ENCODE measurements at regions of chr4 and their contacts with region 1.

Region 1: GRCh38 chr4:107757864-107758476 is 37.9 kb upstream of the PAPSS1 start:
- DNase-seq: peak; percentile 20
- CTCF ChIP-seq: peak; percentile 40

Region 2: DNA sequence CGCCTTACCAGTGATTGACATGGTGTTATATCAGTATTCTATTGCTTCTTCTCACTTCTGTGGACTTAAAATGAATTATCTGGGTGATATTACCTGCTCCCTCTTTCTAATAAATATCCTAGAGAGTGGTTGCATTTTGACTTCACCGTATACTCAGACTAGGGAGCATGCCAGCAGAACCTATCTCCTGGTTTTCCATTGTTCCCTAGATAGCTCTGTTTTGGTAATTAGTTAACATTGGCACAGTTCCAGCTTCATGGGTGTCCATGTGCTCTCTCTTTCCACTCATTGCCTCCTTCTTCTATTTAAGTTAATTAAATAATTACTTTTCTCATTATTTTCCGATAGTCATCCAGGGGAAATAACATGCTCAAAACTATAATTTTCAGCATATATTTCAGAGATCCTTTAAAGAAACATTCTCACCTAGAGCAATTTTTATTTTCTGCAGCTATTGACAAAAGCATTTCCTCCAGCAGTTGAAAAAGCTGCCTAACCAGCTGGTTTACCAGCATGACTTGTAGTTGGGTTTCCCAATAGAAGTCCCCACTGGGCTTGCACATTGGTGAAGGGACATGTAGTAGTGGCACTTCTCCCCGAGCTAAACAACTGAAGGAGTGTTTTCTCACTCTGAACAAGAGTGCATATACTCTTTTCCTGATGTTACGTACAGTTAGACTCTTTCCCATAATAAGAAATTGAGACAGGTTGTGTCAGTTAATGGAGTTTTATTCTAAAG is 10.1 kb before region 1 on chr4:
- CTCF ChIA-PET with region 1: interaction called, 22 read pairs
- POLR2A ChIA-PET with region 1: no interaction called
- DNase-seq: no peak
- CTCF ChIP-seq: no peak

Region 3: DNA sequence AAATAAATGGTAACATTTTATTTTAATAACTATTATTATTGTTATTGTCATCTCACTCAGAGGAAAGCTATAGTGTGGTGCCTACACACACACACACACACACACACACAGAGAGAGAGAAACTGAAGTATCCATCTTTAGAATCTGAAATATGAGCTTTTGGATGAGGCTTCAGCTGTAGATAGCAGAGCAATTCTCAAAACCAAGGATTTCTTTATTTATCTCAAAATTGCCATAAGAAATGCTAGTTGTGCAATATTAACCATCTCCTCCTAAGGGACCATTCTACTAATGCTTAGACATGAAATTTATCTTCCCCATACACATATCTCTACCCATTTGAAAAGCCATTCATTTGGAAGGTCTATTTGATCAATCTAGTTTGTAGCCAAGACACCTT is 16.7 kb after region 1 on chr4:
- CTCF ChIA-PET with region 1: interaction called, 14 read pairs
- POLR2A ChIA-PET with region 1: no interaction called
- DNase-seq: no peak
- CTCF ChIP-seq: no peak

Region 4: DNA sequence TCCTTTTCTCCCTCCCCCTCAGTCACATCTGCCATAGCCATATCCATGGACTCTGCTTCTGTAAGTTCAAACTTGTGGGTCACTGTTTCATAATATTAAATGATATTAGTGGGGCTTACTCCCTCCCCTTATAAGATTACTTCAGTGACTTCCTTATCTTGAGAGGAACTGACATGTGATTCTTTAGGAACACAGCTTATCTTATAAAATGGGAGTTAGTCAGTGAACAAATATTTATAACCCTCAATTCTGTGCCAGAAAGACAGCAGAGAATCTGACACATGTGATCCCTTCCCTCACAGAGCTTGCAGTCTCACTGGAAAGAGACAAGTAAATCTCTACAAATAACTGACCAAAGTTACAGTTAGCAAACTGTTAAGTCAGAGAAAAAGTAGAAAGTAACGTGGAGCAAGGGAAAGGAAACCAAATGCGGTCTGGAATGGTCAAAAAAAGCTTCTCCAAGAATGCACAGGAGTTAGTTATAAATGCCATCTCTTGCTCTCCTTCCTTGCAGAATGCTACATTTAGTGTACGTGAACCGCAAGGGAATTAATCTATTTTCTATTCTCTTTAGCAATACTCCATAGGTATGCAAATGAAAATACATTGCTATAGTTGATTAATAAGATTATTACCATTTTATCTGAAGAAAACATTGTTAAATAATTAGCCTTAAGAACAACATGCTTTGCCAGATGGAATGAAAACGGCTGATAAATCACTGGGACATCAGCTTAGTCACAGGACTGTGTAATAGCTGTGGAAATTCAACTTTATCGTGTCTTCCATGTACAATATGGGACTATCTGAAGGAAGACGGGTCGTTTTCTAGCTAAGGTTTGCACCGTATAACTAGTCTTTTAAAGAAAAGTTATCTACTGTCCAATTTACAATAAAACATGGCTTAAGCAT is 95.7 kb after region 1 on chr4:
- CTCF ChIA-PET with region 1: no interaction called
- POLR2A ChIA-PET with region 1: no interaction called
- DNase-seq: no peak
- CTCF ChIP-seq: no peak

Region 5: DNA sequence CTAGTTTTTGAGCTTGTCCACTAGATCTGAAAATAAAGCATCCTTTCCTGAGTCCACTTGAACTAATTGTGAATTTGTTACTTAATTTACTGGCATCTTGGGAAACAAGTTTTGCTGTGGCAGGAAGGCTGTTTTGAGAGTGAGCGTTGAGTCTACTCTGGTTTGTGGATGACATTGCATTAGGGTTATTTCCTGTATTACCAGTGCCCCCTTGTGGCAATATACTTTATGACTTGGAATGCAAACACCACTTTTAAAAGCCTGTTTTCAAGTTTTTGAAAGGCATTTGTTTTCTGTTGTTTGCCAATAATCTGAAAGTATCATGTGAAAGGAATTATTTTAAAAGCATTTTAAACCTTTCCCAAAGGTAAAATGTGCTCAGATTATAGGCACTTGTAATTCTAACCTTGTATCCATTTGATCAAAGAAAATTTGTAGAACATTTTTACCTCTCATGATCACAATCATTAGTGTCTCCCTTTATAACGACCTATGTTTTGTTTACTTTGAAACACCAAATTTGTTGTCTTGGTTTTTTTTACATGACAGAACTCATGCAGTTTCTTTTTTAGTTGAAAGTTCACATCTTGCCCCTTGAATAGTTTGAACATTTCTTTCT is 155.4 kb after region 1 on chr4:
- CTCF ChIA-PET with region 1: interaction called, 24 read pairs
- POLR2A ChIA-PET with region 1: no interaction called
- DNase-seq: peak; percentile 25
- CTCF ChIP-seq: peak; percentile 71

Measured in GM10248 (cell line).